ENCODE measurements at regions of chr17 and their contacts with region 1.

Region 1: DNA sequence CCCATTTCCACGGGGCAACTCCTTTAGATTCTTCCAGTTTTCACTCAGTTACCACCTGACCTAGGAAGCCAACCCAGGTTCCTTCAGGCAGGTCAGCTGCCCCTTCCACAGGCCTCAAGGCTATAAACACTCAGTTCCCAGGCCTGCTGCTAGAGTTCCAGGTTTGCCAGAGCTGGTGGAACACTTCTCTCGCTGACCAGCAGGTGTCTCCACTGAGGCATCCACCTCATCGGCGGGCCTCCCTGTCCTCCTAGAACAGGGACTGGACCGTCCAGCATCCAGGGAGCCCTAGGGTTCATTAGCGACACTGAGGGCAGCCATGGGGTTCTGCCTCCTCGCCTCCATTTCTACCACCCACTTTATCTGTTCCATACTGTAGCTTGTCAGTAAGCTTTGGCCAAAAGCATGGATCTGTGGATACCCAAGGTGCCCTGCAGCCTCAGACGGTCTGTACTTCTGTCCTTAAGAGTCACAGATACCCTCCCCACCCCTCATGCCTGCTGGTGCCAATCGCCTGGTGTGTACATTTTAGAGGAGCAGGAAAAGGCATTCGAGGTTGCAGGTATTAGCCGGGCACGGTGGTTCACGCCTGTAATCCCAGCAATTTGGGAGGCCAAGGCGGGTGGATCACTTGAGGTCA is 29.0 kb downstream of the PIMREG start:
- DNase-seq: peak; percentile 38 to 77 (median 57)
- ATAC-seq: peak; percentile 71
- H3K4me3 ChIP-seq: no peak overlapping the region
- H3K4me3 Mint-ChIP-seq: no peak overlapping the region
- H3K27ac ChIP-seq: no peak overlapping the region
- H3K27ac Mint-ChIP-seq: no peak overlapping the region
- H3K4me1 ChIP-seq: peaks cover 6% of the 10 kb centered on the region
- H3K4me1 Mint-ChIP-seq: no peaks in the 10 kb centered on the region
- H3K27me3 ChIP-seq: no peaks in the 10 kb centered on the region
- H3K27me3 Mint-ChIP-seq: no peaks in the 10 kb centered on the region
- CTCF ChIP-seq: peak; percentile 93

Region 2: GRCh38 chr17:6429266-6429665 is 44.0 kb before region 1 on chr17:
- CTCF ChIA-PET with region 1: no interaction called
- POLR2A ChIA-PET with region 1: no interaction called
- intact Hi-C with region 1: no loop called
- DNase-seq: no peak
- ATAC-seq: no peak
- H3K4me3 ChIP-seq: no peak overlapping the region
- H3K4me3 Mint-ChIP-seq: no peak overlapping the region
- H3K27ac ChIP-seq: no peak overlapping the region
- H3K27ac Mint-ChIP-seq: no peak overlapping the region
- H3K4me1 ChIP-seq: peaks cover 20% of the 10 kb centered on the region
- H3K4me1 Mint-ChIP-seq: peaks cover 16% of the 10 kb centered on the region
- H3K27me3 ChIP-seq: no peaks in the 10 kb centered on the region
- H3K27me3 Mint-ChIP-seq: peaks cover 3% of the 10 kb centered on the region
- CTCF ChIP-seq: no peak

Region 3: GRCh38 chr17:6454957-6455705 is 18.1 kb before region 1 on chr17:
- CTCF ChIA-PET with region 1: interaction called, 11 read pairs
- POLR2A ChIA-PET with region 1: no interaction called
- intact Hi-C with region 1: no loop called
- DNase-seq: peak; percentile 13 to 76 (median 47)
- ATAC-seq: peak; percentile 91
- H3K4me3 ChIP-seq: peak overlapping the region; percentile 38
- H3K4me3 Mint-ChIP-seq: peak overlapping the region; percentile 76
- H3K27ac ChIP-seq: peak overlapping the region in 1 of 2 donors; percentile 41
- H3K27ac Mint-ChIP-seq: peak overlapping the region; percentile 65
- H3K4me1 ChIP-seq: peaks cover 10% of the 10 kb centered on the region
- H3K4me1 Mint-ChIP-seq: peaks cover 14% of the 10 kb centered on the region
- H3K27me3 ChIP-seq: no peaks in the 10 kb centered on the region
- H3K27me3 Mint-ChIP-seq: no peaks in the 10 kb centered on the region
- CTCF ChIP-seq: no peak

Region 4: GRCh38 chr17:6507535-6507934 is 34.3 kb after region 1 on chr17:
- CTCF ChIA-PET with region 1: no interaction called
- POLR2A ChIA-PET with region 1: no interaction called
- intact Hi-C with region 1: no loop called
- DNase-seq: peak in 1 of 14 experiments; percentile 2
- ATAC-seq: no peak
- H3K4me3 ChIP-seq: no peak overlapping the region
- H3K4me3 Mint-ChIP-seq: no peak overlapping the region
- H3K27ac ChIP-seq: no peak overlapping the region
- H3K27ac Mint-ChIP-seq: no peak overlapping the region
- H3K4me1 ChIP-seq: no peaks in the 10 kb centered on the region
- H3K4me1 Mint-ChIP-seq: no peaks in the 10 kb centered on the region
- H3K27me3 ChIP-seq: peaks cover 4 to 7% of the 10 kb centered on the region in 2 experiments
- H3K27me3 Mint-ChIP-seq: peaks cover 7% of the 10 kb centered on the region
- CTCF ChIP-seq: no peak

Region 5: DNA sequence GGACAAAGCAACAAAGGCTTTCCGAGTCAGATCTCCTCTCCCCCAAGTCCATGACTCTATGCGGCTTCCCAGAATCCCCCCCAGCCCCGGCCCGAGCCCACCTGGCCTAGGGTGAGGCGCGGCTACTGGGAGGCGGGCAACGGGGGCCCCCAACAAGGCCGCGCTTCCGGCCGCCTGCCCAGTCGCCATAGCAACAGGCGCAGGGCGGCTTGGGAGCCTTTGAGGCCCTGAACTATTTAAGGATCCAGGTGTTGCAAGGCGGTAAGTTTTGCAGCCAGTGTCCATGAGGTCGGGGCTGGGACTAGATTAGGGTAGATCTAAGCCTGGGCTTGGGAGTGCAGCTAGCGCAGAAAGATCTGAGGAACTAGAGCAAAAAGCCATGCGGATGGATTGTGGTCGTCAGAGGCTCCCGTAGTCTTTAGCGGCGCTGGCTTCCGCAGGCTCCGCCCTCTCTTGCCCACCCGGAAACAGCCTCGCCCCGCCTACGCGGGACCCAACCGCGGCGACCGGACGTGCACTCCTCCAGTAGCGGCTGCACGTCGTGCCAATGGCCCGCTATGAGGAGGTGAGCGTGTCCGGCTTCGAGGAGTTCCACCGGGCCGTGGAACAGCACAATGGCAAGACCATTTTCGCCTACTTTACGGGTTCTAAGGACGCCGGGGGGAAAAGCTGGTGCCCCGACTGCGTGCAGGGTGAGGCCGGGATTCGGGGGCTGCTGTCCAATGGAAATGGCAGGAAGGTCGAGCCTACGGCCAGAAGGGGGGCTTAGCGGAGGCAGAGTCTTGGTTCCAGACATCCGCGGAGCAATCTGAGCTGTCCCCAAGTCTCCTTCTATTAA is 167.5 kb after region 1 on chr17 and contains the starts of genes KIAA0753 and TXNDC17:
- CTCF ChIA-PET with region 1: no interaction called
- POLR2A ChIA-PET with region 1: interaction called, 3 read pairs
- intact Hi-C with region 1: loop called in 1 of 2 experiments (anchors 5 kb)
- DNase-seq: peak; percentile 71 to 94 (median 88)
- ATAC-seq: peak; percentile 81
- H3K4me3 ChIP-seq: peak within 1 kb of the TSS; percentile 98
- H3K4me3 Mint-ChIP-seq: peak within 1 kb of the TSS; percentile 99
- H3K27ac ChIP-seq: peak within 1 kb of the TSS; percentile 76 to 88
- H3K27ac Mint-ChIP-seq: peak within 1 kb of the TSS; percentile 95
- H3K4me1 ChIP-seq: peaks cover 38% of the 10 kb centered on the region
- H3K4me1 Mint-ChIP-seq: peaks cover 78% of the 10 kb centered on the region
- H3K27me3 ChIP-seq: no peaks in the 10 kb centered on the region
- H3K27me3 Mint-ChIP-seq: no peaks in the 10 kb centered on the region
- CTCF ChIP-seq: no peak
- total RNA-seq, gene KIAA0753: 8.9 to 11.7 TPM
- total RNA-seq, gene TXNDC17: 13.2 to 17.7 TPM

Region 6: GRCh38 chr17:6651357-6651918 is 178.2 kb after region 1 on chr17 and contains the starts of genes C17orf100 and MED31:
- CTCF ChIA-PET with region 1: interaction called, 3 read pairs
- POLR2A ChIA-PET with region 1: interaction called, 3 read pairs
- intact Hi-C with region 1: loop called in 1 of 2 experiments (anchors 2 kb)
- DNase-seq: peak; percentile 87 to 98 (median 94)
- ATAC-seq: peak; percentile 81
- H3K4me3 ChIP-seq: peak within 1 kb of the TSS; percentile 64
- H3K4me3 Mint-ChIP-seq: peak within 1 kb of the TSS; percentile 99
- H3K27ac ChIP-seq: peak within 1 kb of the TSS; percentile 98
- H3K27ac Mint-ChIP-seq: peak within 1 kb of the TSS; percentile 99
- H3K4me1 ChIP-seq: peaks cover 35% of the 10 kb centered on the region
- H3K4me1 Mint-ChIP-seq: peaks cover 73% of the 10 kb centered on the region
- H3K27me3 ChIP-seq: peaks cover 0 to 4% of the 10 kb centered on the region in 2 experiments
- H3K27me3 Mint-ChIP-seq: no peaks in the 10 kb centered on the region
- CTCF ChIP-seq: no peak
- total RNA-seq, gene C17orf100: 0.69 to 0.70 TPM
- total RNA-seq, gene MED31: 31.4 to 32.0 TPM

Region 7: DNA sequence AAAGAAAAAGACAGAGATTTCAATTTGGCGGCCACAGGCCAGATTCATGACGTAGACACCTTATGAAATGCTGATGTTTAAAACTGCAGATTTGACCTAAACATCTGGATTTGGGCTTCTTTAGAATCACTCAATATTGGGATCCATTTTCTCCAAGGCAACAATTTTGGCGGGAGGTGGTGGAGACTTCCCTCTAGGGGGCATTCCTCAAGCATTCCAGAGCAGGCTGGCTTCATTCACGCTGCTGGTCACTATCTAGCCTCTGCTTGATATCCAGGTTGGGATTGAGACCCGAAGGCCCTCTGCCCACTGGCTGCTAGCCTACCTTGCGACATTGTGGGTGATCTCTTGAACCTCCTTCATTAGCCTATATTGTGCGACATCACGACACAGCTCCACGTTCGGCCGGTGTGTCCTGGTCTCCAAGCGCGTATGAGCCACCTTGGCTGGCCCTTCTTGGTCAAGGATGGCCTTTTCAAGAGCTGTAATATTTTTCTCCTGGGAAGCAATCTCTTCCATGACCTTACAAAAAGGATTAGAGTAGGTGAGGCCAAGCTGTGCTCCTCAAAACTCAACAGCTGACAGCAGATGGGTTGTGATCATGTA is 327.3 kb after region 1 on chr17:
- CTCF ChIA-PET with region 1: no interaction called
- POLR2A ChIA-PET with region 1: no interaction called
- intact Hi-C with region 1: loop called in 1 of 2 experiments (anchors 2 kb)
- DNase-seq: peak in 2 of 14 experiments; percentile 20 to 39
- ATAC-seq: no peak
- H3K4me3 ChIP-seq: no peak overlapping the region
- H3K4me3 Mint-ChIP-seq: no peak overlapping the region
- H3K27ac ChIP-seq: no peak overlapping the region
- H3K27ac Mint-ChIP-seq: no peak overlapping the region
- H3K4me1 ChIP-seq: no peaks in the 10 kb centered on the region
- H3K4me1 Mint-ChIP-seq: no peaks in the 10 kb centered on the region
- H3K27me3 ChIP-seq: no peaks in the 10 kb centered on the region
- H3K27me3 Mint-ChIP-seq: no peaks in the 10 kb centered on the region
- CTCF ChIP-seq: peak; percentile 39

Region 8: GRCh38 chr17:7004398-7005253 is 531.4 kb after region 1 on chr17:
- CTCF ChIA-PET with region 1: interaction called, 5 read pairs
- POLR2A ChIA-PET with region 1: no interaction called
- intact Hi-C with region 1: loop called in 1 of 2 experiments (anchors 10 kb)
- DNase-seq: peak in 5 of 14 experiments; percentile 19 to 84 (median 81)
- ATAC-seq: peak; percentile 97
- H3K4me3 ChIP-seq: no peak overlapping the region
- H3K4me3 Mint-ChIP-seq: peak overlapping the region; percentile 70
- H3K27ac ChIP-seq: no peak overlapping the region
- H3K27ac Mint-ChIP-seq: peak overlapping the region; percentile 13
- H3K4me1 ChIP-seq: peaks cover 9% of the 10 kb centered on the region
- H3K4me1 Mint-ChIP-seq: peaks cover 20% of the 10 kb centered on the region
- H3K27me3 ChIP-seq: no peaks in the 10 kb centered on the region
- H3K27me3 Mint-ChIP-seq: no peaks in the 10 kb centered on the region
- CTCF ChIP-seq: peak; percentile 81

Measured in CD4-positive, alpha-beta T cell (primary cell).